ENCODE measurements at regions of chr1 and their contacts with region 1.

Region 1: GRCh38 chr1:54488779-54489626 is 59.0 kb upstream of the ACOT11 start:
- DNase-seq: peak; percentile 51 to 87
- H3K4me3 ChIP-seq: peak overlapping the region; percentile 64
- H3K27ac ChIP-seq: peak overlapping the region; percentile 28; the same call in 1 of the 2 replicates
- H3K4me1 ChIP-seq: peaks cover 5% of the 10 kb centered on the region; the same call in 1 of the 2 replicates
- H3K27me3 ChIP-seq: no peaks in the 10 kb centered on the region
- CTCF ChIP-seq: peak; percentile 97

Region 2: GRCh38 chr1:54052934-54053744 is 435.9 kb before region 1 on chr1 and contains the starts of genes TCEANC2 and TMEM59:
- CTCF ChIA-PET with region 1: interaction called, 3 read pairs
- POLR2A ChIA-PET with region 1: interaction called, 4 read pairs
- intact Hi-C with region 1: loop called (anchors 5 kb)
- DNase-seq: peak; percentile 97 to 99
- H3K4me3 ChIP-seq: peak within 1 kb of the TSS; percentile 85
- H3K27ac ChIP-seq: peak within 1 kb of the TSS; percentile 35
- H3K4me1 ChIP-seq: peaks cover 27% of the 10 kb centered on the region
- H3K27me3 ChIP-seq: no peaks in the 10 kb centered on the region
- CTCF ChIP-seq: no peak
- total RNA-seq, gene TCEANC2: 8.8 and 11.5 TPM in 2 replicates
- total RNA-seq, gene TMEM59: 239 and 287 TPM in 2 replicates

Region 3: GRCh38 chr1:54199765-54200518 is 289.1 kb before region 1 on chr1 and contains the starts of genes CYB5RL and MRPL37:
- CTCF ChIA-PET with region 1: no interaction called
- POLR2A ChIA-PET with region 1: no interaction called
- intact Hi-C with region 1: loop called (anchors 5 kb)
- DNase-seq: peak; percentile 93 to 94
- H3K4me3 ChIP-seq: peak within 1 kb of the TSS; percentile 98
- H3K27ac ChIP-seq: no peak within 1 kb of the TSS
- H3K4me1 ChIP-seq: peaks cover 18% of the 10 kb centered on the region
- H3K27me3 ChIP-seq: no peaks in the 10 kb centered on the region
- CTCF ChIP-seq: no peak
- total RNA-seq, gene CYB5RL: 6.5 and 6.7 TPM in 2 replicates
- total RNA-seq, gene MRPL37: 180 and 198 TPM in 2 replicates

Region 4: GRCh38 chr1:54323324-54323739 is 165.7 kb before region 1 on chr1:
- CTCF ChIA-PET with region 1: no interaction called
- POLR2A ChIA-PET with region 1: no interaction called
- intact Hi-C with region 1: loop called (anchors 5 kb)
- DNase-seq: peak in 1 of 2 experiments; percentile 18
- H3K4me3 ChIP-seq: no peak overlapping the region
- H3K27ac ChIP-seq: no peak overlapping the region
- H3K4me1 ChIP-seq: no peaks in the 10 kb centered on the region
- H3K27me3 ChIP-seq: no peaks in the 10 kb centered on the region
- CTCF ChIP-seq: no peak

Region 5: DNA sequence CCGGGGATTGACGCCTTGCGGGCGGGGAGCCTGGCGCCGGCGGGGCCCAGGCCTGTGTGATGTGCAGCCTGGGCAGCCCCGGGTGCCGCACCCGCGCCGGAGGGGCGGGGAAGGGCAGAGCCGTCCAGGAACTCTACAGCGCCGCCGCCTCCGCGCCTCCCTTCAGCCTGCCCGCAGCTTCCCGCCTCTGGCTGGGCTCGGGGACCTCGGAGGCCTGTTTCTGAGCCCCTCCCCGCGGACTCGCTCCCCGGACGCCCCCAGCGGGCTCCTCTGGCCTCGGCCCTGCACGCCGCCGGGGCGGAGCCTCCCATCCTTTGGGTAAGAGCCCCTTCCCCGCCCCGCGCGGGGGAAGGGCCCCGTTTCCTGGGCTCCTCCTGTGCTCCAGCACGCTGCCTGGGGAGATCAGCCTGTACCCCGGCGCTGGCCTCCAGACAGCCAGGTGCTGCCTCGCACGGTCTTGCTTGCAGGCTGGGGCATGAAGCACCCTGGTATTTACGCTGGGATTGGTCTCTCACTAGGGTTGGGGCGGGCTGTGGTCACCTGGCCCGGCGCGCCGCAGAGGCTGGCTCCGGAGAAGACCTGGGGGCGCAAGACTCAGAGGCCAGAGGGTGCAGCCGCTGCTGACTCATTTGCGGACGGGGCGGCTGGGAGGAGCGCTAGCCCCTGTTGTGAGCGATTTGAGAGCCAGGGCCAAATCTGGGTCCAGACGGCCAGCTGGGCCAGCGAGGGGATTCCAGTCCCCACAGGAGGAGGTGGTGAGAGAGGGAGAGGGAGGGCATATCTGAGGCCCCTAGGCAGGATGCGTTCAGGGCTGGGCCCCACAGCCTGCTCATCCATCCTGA is 53.3 kb after region 1 on chr1:
- CTCF ChIA-PET with region 1: no interaction called
- POLR2A ChIA-PET with region 1: no interaction called
- intact Hi-C with region 1: loop called (anchors 1 kb)
- DNase-seq: peak; percentile 77 to 94
- H3K4me3 ChIP-seq: peak overlapping the region; percentile 62; the same call in 1 of the 2 replicates
- H3K27ac ChIP-seq: no peak overlapping the region
- H3K4me1 ChIP-seq: peaks cover 6% of the 10 kb centered on the region; the same call in 1 of the 2 replicates
- H3K27me3 ChIP-seq: no peaks in the 10 kb centered on the region
- CTCF ChIP-seq: no peak; the same call in 1 of the 2 replicates

Region 6: GRCh38 chr1:54810100-54810942 is 321.3 kb after region 1 on chr1:
- CTCF ChIA-PET with region 1: interaction called, 3 read pairs
- POLR2A ChIA-PET with region 1: no interaction called
- intact Hi-C with region 1: loop called (anchors 2 kb)
- DNase-seq: peak; percentile 33 to 73
- H3K4me3 ChIP-seq: no peak overlapping the region
- H3K27ac ChIP-seq: no peak overlapping the region
- H3K4me1 ChIP-seq: peaks cover 26% of the 10 kb centered on the region
- H3K27me3 ChIP-seq: no peaks in the 10 kb centered on the region
- CTCF ChIP-seq: peak; percentile 83

Measured in PC-9 (cell line).